ENCODE measurements at regions of chr10 and their contacts with region 1.

Region 1: DNA sequence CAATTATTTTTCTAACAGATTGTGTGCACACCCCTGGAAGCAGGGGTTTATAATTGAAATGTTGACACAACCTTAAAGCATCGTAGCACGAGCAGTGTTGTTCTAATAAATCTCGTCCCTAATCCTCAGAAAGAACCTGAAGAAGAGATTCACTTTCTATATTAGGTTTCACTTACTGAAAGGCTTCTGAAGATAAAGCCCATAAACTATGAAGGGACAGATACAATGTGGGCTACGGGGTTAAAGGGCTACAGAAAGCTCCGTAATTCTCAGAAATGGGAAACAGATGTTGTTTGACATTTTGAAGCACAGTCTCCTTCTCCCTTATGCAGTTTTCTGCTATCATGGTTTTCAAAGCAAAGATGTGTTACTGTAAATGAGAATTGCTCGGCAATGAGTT is 479.6 kb downstream of the GATA3 start:
- H3K4me3 ChIP-seq: no peak overlapping the region
- H3K27ac ChIP-seq: peak overlapping the region; percentile 48; the same call in 1 of the 2 replicates
- H3K4me1 ChIP-seq: peaks cover 7% of the 10 kb centered on the region; the same call in 1 of the 2 replicates
- CTCF ChIP-seq: no peak

Region 2: DNA sequence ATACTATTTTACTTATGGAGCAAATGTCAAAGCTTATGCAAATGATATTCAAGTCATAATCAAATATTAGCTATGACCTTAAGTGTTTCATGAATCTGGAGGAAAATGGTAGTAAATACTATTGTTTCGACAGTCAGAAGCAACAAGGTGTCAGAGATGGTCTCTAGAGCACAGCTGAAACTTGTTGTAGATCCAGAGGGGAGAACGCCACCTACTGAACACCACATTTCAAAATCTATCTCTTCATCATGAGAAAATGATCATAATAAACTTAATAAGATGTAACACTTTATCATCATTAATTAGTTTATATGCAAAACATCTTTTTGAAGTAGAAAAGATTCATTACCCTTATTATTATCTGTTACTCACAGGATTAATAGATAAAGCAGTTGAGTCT is 60.9 kb before region 1 on chr10:
- CTCF ChIA-PET with region 1: no interaction called
- POLR2A ChIA-PET with region 1: no interaction called
- H3K4me3 ChIP-seq: no peak overlapping the region
- H3K27ac ChIP-seq: no peak overlapping the region
- H3K4me1 ChIP-seq: no peaks in the 10 kb centered on the region
- CTCF ChIP-seq: no peak

Region 3: GRCh38 chr10:8637640-8638039 is 103.5 kb after region 1 on chr10:
- CTCF ChIA-PET with region 1: no interaction called
- POLR2A ChIA-PET with region 1: interaction called, 12 read pairs
- H3K4me3 ChIP-seq: no peak overlapping the region
- H3K27ac ChIP-seq: no peak overlapping the region
- H3K4me1 ChIP-seq: no peaks in the 10 kb centered on the region
- CTCF ChIP-seq: no peak